ENCODE measurements at regions of chr13 and their contacts with region 1.

Region 1: DNA sequence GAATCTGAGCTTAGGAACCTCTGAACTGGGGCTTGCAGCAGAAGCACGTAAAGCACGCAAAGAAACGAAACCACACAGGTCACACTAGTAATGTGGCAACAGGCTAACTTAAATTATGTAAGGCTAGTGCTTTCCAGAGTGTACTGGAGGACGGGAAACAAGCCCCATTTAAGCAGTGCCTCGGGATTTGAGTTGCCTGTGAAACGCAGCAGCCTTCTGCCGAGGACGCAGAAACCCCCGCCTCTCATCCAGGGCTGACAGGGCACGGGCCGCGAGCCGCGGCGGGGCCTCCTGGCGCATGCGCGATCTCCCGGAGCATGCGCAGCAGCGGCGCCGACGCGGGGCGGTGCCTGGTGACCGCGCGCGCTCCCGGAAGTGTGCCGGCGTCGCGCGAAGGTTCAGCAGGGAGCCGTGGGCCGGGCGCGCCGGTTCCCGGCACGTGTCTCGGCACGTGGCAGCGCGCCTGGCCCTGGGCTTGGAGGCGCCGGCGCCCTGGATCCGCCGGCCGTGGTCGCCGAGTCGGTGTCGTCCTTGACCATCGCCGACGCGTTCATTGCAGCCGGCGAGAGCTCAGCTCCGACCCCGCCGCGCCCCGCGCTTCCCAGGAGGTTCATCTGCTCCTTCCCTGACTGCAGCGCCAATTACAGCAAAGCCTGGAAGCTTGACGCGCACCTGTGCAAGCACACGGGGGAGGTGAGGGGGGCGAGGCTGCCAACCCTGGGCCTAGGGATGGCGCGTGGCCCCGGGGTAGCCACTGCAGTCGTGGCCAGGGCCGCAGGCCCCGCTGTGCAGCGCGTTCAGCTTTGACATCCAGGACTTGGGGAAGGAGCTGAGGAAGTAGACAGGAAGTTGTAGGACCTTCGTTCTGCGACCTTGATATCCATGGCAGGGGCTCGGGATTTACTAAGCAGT is at the start of gene GTF3A:
- DNase-seq: peak; percentile 90
- H3K4me3 Mint-ChIP-seq: peak within 1 kb of the TSS; percentile 80
- H3K27ac Mint-ChIP-seq: peak within 1 kb of the TSS; percentile 96
- H3K4me1 Mint-ChIP-seq: peaks cover 41% of the 10 kb centered on the region
- H3K27me3 Mint-ChIP-seq: no peaks in the 10 kb centered on the region
- total RNA-seq, gene GTF3A: 187 to 189 TPM

Region 2: DNA sequence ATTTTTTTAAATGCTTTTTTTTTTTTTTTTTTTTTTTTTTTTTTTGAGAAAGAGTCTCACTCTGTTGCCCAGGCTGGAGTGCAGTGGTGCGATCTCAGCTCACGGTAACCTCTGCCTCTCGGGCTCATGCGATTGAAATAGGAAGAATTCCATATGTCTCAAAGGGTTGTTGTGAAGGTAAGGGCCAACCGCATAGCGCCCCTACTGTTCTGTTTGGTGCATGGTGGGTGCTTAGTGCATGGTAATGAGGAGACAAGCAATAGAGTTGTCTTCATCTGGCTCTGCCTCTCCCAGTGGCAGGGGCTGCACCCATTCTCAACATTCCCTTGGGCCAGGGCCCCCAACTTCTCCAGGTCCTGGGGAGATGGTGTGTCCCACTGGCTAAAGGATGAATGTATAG is 85.2 kb before region 1 on chr13:
- CTCF ChIA-PET with region 1: no interaction called
- POLR2A ChIA-PET with region 1: no interaction called
- DNase-seq: peak; percentile 38
- H3K4me3 Mint-ChIP-seq: no peak overlapping the region
- H3K27ac Mint-ChIP-seq: no peak overlapping the region
- H3K4me1 Mint-ChIP-seq: no peaks in the 10 kb centered on the region
- H3K27me3 Mint-ChIP-seq: peaks cover 20% of the 10 kb centered on the region

Region 3: DNA sequence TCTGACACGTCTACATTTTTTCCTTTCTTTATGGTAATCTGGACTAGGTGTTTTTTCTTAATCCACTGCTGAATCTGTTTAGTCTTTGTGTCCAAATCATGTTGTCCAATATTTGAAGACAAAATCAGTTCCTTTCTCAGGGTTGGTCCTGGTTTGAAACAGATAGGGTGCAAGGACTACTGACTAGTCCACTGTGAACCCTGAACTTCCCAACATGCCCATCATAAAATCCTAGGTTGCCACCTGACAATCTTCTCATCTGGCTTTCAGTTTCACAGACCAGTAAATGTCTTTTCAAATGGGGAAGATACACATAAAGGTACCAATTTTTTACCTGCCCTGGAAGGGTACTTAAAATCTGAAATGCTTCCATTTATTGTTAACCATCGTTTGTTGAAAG is 12.6 kb after region 1 on chr13:
- CTCF ChIA-PET with region 1: no interaction called
- POLR2A ChIA-PET with region 1: interaction called, 113 read pairs
- DNase-seq: no peak
- H3K4me3 Mint-ChIP-seq: no peak overlapping the region
- H3K27ac Mint-ChIP-seq: no peak overlapping the region
- H3K4me1 Mint-ChIP-seq: peaks cover 57% of the 10 kb centered on the region
- H3K27me3 Mint-ChIP-seq: no peaks in the 10 kb centered on the region

Region 4: DNA sequence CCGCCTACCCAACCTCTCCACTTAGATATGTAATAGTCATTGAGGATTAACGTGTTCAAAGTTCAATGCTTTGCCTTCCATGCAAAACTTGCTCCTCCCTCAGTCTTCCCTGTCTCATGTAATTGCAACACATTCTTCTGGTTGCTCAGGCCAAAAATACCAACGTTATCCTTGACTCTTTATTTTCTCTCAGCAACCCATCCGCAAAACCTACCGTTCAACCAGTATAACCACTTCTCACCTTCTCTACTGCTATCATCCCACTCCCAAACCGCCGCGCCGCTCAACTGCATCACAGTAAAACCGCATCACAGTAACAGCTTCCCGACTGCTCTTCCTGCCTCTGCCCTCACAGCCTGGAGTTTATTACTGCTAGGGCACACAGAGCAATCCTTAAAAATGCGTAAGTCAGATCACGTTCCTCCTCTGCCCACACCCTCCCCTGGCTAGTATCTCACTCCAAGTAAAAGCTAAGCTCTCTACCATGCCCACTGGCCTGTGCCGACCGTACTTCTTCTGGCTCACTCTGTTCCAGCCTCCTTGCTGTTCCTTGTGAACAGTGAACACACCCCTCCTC is 17.7 kb after region 1 on chr13:
- CTCF ChIA-PET with region 1: interaction called, 47 read pairs
- POLR2A ChIA-PET with region 1: interaction called, 351 read pairs
- DNase-seq: peak; percentile 38
- H3K4me3 Mint-ChIP-seq: peak overlapping the region; percentile 51
- H3K27ac Mint-ChIP-seq: peak overlapping the region; percentile 61
- H3K4me1 Mint-ChIP-seq: peaks cover 71% of the 10 kb centered on the region
- H3K27me3 Mint-ChIP-seq: no peaks in the 10 kb centered on the region

Region 5: GRCh38 chr13:27449936-27450828 is 25.7 kb after region 1 on chr13 and contains the start of gene MTIF3:
- CTCF ChIA-PET with region 1: interaction called, 47 read pairs
- POLR2A ChIA-PET with region 1: interaction called, 351 read pairs
- DNase-seq: peak; percentile 97
- H3K4me3 Mint-ChIP-seq: peak within 1 kb of the TSS; percentile 92
- H3K27ac Mint-ChIP-seq: peak within 1 kb of the TSS; percentile 93
- H3K4me1 Mint-ChIP-seq: peaks cover 60% of the 10 kb centered on the region
- H3K27me3 Mint-ChIP-seq: no peaks in the 10 kb centered on the region
- total RNA-seq, gene MTIF3: 61.6 to 61.8 TPM

Region 6: GRCh38 chr13:27455331-27455855 is 30.9 kb after region 1 on chr13:
- CTCF ChIA-PET with region 1: interaction called, 47 read pairs
- POLR2A ChIA-PET with region 1: interaction called, 351 read pairs
- DNase-seq: peak; percentile 31
- H3K4me3 Mint-ChIP-seq: peak overlapping the region; percentile 83
- H3K27ac Mint-ChIP-seq: peak overlapping the region; percentile 93
- H3K4me1 Mint-ChIP-seq: peaks cover 32% of the 10 kb centered on the region
- H3K27me3 Mint-ChIP-seq: peaks cover 2% of the 10 kb centered on the region

Region 7: DNA sequence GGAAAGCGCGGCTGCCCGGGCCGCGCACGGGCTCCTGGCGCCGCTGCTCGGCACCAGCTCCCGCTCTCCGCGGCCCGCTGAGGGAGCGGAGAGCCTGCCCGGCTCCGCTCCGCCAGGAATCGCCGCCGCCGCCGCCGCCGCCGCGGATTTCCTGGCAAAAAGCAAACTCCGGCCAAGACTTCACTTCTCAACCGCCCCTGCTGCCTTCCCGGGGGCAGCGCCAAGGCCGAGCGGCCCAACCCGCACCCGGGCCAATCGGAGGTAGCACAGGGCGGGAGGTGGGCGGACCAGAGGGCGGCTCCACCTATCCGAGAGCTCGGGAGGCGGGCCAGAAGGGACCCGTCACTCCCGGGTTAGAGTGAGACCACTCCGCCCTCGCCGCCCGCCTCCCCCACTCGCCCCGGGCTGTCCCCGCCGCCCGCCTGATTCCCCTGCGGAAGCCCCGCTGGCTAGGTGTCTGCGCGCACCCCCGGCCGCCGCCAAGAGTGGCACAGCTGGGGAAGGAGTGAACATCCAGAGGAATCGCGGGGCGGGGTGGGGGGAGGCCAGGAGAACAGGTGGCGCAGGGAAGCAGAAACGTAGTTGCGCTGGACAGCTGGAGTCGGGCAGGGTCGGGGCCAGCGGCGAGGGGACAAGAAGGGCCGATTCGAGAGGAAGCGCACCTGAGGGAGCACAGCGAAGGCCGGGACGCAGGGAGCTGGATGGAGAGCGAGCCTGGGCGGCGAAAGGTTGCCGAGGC is 196.0 kb after region 1 on chr13 and contains the start of gene LNX2:
- CTCF ChIA-PET with region 1: interaction called, 7 read pairs
- POLR2A ChIA-PET with region 1: interaction called, 76 read pairs
- DNase-seq: peak; percentile 97
- H3K4me3 Mint-ChIP-seq: peak within 1 kb of the TSS; percentile 94
- H3K27ac Mint-ChIP-seq: peak within 1 kb of the TSS; percentile 94
- H3K4me1 Mint-ChIP-seq: peaks cover 52% of the 10 kb centered on the region
- H3K27me3 Mint-ChIP-seq: no peaks in the 10 kb centered on the region
- total RNA-seq, gene LNX2: 8.0 to 8.1 TPM

Measured in activated CD4-positive, alpha-beta memory T cell treated with anti-CD3 and anti-CD28 coated beads, Interleukin-2, amount 10 ng/mL, durations not matched to agents 7 days and 5 days (primary cell).